ENCODE measurements at regions of chr5 and their contacts with region 1.

Region 1: DNA sequence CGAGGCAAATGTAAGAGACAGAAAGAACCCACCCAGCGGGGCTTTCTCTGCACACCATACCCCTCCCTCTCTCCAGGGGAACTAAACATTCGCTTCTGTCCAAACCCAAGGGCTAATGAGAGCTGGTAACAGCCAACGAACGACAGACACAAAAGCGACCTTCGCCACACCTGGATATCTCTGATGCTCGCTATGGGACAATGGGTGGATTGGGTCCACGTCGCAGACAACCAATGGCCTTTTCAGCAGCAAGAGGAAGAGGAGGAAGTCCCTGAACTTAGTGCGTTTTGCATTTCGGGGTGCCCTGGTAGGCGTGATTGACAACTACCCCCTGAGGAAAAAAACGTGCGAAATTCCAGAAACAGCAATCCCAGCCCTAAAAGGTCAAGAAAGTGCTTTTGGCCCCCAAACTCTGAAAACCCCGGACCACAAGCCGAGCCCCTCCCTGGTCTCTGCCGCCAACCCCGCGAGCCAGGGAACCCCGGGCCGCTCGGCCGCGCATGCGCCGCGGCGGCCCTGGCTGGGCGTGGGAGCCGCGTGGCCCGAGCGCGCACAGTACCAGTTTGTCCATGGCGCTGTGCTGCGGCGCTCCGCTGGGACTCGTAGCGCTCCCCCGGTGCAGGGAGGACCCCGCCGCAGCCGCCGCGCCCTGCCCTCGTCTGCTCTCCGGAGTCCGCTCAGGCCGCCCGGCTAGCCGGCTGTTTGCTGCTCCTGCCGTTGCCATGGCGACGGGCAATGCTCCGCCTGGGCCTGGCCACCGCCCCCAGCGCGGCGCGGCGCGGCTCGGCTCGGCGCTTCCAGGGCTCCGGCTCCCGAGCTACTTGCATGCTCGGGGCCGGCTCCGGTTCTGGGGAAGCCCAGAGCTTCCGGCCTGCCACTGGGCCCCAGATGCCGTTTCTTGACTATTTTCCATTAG is 66.9 kb upstream of the DNAH5 start:
- DNase-seq: peak; percentile 92

Region 2: DNA sequence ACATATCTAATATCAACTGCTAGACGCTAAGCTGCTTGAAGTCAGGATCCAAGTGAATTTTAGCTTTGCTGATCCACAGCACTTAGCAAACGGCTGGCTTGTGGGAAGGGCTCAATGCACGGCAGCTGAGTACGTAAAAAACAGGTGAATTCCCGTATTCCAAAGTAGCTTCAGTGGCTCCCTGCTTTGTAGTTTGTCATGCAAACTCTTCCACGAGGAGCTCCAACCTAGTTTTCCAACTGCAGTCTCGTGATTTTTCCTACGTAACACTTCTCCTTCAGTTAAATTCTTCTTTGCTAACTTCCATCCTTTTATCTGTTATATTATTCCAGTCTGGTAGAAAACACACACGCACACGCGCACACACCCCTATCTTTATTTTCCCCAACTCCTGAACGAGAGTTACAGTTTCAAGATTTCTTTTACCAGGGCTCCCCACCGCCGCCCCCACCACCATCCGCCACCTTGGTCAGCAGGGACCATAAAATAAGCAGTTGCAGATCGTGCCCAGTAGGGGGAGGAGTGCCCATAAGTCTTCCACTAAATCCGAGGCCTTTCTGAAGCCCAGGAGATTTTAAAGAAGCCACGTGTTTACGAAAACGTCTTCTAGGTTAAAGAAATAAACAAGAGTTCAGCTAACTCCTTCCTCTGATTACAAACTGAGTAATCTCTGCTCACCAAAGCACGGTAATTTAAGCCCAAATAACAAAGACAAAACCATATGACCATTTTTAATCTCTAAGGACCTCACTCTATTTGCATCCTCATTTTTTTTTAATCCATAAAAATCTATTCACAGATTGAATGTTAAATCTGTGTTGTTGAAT is 97.0 kb after region 1 on chr5:
- in situ Hi-C with region 1: loop called (anchors 25 kb)
- DNase-seq: peak; percentile 93